Endothelial cell of umbilical vein (primary cell): ENCODE measurements at regions of chr4 and their contacts with region 1.

Region 1: GRCh38 chr4:114015444-114015899 is 36.0 kb upstream of the ARSJ start:
- DNase-seq: peak; percentile 99
- H3K4me3 ChIP-seq: no peak overlapping the region
- H3K27ac ChIP-seq: peak overlapping the region; percentile 96
- H3K4me1 ChIP-seq: peaks cover 36% of the 10 kb centered on the region
- H3K27me3 ChIP-seq: no peaks in the 10 kb centered on the region
- CTCF ChIP-seq: no peak
- POLR2A ChIP-seq: peak; percentile 74

Region 2: DNA sequence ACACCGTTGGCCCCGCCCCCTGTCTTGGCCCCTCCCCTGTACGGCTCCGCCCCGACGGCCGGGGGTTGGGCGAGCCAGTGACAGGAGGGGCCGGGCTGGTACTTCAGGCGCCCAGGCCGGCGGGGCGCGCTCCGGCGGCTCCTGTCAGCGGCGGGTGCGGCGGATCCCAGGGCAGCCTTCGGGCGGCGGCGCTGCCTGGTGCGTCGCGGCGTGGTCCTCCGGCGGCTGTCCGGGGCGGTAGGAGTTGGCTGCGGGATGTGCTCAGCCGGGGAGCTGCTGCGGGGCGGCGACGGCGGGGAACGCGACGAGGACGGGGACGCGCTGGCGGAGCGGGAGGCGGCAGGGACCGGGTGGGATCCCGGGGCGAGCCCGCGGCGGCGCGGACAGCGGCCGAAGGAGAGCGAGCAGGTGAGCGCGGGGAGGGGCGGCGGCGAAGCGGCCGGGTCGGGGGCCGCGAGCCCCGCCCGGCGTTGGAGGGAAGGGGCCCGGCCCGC is 1870.1 kb before region 1 on chr4 and contains the start of gene FAM241A:
- CTCF ChIA-PET with region 1: no interaction called
- POLR2A ChIA-PET with region 1: no interaction called
- dilution Hi-C with region 1: no loop called
- intact Hi-C with region 1: loop called (anchors 10 kb)
- DNase-seq: peak; percentile 81
- H3K4me3 ChIP-seq: peak within 1 kb of the TSS; percentile 88 to 96 (median 91)
- H3K27ac ChIP-seq: peak within 1 kb of the TSS; percentile 77
- H3K4me1 ChIP-seq: peaks cover 24% of the 10 kb centered on the region
- H3K27me3 ChIP-seq: no peaks in the 10 kb centered on the region
- CTCF ChIP-seq: no peak
- POLR2A ChIP-seq: peak; percentile 92
- total RNA-seq, gene FAM241A: 8.3 and 9.1 TPM in 2 replicates

Region 3: DNA sequence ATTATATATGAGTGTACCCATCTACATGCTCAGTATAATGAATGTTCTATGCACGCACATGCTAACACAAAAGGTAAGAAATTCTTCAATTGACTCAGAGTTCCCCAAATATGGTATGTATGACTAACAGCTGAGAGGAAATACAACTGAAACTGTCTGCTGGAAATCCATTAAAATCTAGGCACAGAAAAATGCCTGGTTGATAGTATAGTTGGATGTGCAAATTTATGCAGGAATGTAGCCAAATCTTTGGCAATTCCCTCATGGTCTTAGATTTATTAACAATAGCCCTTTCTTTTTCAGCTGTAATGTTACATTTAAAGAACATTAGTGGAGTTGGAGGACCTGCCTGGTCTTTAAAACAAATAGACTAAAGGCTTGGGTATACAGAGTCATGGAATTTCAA is 259.5 kb before region 1 on chr4:
- CTCF ChIA-PET with region 1: no interaction called
- POLR2A ChIA-PET with region 1: no interaction called
- dilution Hi-C with region 1: no loop called
- intact Hi-C with region 1: loop called (anchors 1 kb)
- DNase-seq: peak; percentile 73
- H3K4me3 ChIP-seq: no peak overlapping the region
- H3K27ac ChIP-seq: no peak overlapping the region
- H3K4me1 ChIP-seq: peaks cover 29% of the 10 kb centered on the region
- H3K27me3 ChIP-seq: no peaks in the 10 kb centered on the region
- CTCF ChIP-seq: no peak
- POLR2A ChIP-seq: no peak

Region 4: GRCh38 chr4:113878668-113879067 is 136.8 kb before region 1 on chr4:
- CTCF ChIA-PET with region 1: no interaction called
- POLR2A ChIA-PET with region 1: no interaction called
- dilution Hi-C with region 1: no loop called
- intact Hi-C with region 1: loop called (anchors 2 kb)
- DNase-seq: peak; percentile 40
- H3K4me3 ChIP-seq: no peak overlapping the region
- H3K27ac ChIP-seq: no peak overlapping the region
- H3K4me1 ChIP-seq: peaks cover 16% of the 10 kb centered on the region
- H3K27me3 ChIP-seq: no peaks in the 10 kb centered on the region
- CTCF ChIP-seq: peak; percentile 25 to 30
- POLR2A ChIP-seq: no peak

Region 5: GRCh38 chr4:113979148-113979904 is 36.1 kb before region 1 on chr4 and contains the start of gene ARSJ:
- CTCF ChIA-PET with region 1: interaction called, 11 read pairs
- POLR2A ChIA-PET with region 1: interaction called, 4 read pairs
- dilution Hi-C with region 1: no loop called
- intact Hi-C with region 1: loop called (anchors 1 kb)
- DNase-seq: peak; percentile 82
- H3K4me3 ChIP-seq: peak within 1 kb of the TSS; percentile 92 to 98 (median 97)
- H3K27ac ChIP-seq: peak within 1 kb of the TSS; percentile 92
- H3K4me1 ChIP-seq: peaks cover 12% of the 10 kb centered on the region
- H3K27me3 ChIP-seq: no peaks in the 10 kb centered on the region
- CTCF ChIP-seq: peak in 1 of 2 donors; percentile 3
- POLR2A ChIP-seq: peak; percentile 86
- total RNA-seq, gene ARSJ: 44.0 and 50.0 TPM in 2 replicates

Region 6: GRCh38 chr4:114052227-114052626 is 36.8 kb after region 1 on chr4:
- CTCF ChIA-PET with region 1: no interaction called
- POLR2A ChIA-PET with region 1: no interaction called
- dilution Hi-C with region 1: no loop called
- intact Hi-C with region 1: loop called (anchors 1 kb)
- DNase-seq: no peak
- H3K4me3 ChIP-seq: no peak overlapping the region
- H3K27ac ChIP-seq: no peak overlapping the region
- H3K4me1 ChIP-seq: no peaks in the 10 kb centered on the region
- H3K27me3 ChIP-seq: no peaks in the 10 kb centered on the region
- CTCF ChIP-seq: no peak
- POLR2A ChIP-seq: no peak

Region 7: GRCh38 chr4:114272226-114272625 is 256.8 kb after region 1 on chr4:
- CTCF ChIA-PET with region 1: no interaction called
- POLR2A ChIA-PET with region 1: no interaction called
- dilution Hi-C with region 1: no loop called
- intact Hi-C with region 1: loop called (anchors 1 kb)
- DNase-seq: peak; percentile 87
- H3K4me3 ChIP-seq: no peak overlapping the region
- H3K27ac ChIP-seq: peak overlapping the region; percentile 55
- H3K4me1 ChIP-seq: peaks cover 23% of the 10 kb centered on the region
- H3K27me3 ChIP-seq: no peaks in the 10 kb centered on the region
- CTCF ChIP-seq: no peak
- POLR2A ChIP-seq: no peak